Activated naive CD4-positive, alpha-beta T cell treated with anti-CD3 and anti-CD28 coated beads, Interleukin-2, amount 10 ng/mL, durations not matched to agents 7 days and 5 days (primary cell): ENCODE measurements at regions of chr2 and their contacts with region 1.

Region 1: DNA sequence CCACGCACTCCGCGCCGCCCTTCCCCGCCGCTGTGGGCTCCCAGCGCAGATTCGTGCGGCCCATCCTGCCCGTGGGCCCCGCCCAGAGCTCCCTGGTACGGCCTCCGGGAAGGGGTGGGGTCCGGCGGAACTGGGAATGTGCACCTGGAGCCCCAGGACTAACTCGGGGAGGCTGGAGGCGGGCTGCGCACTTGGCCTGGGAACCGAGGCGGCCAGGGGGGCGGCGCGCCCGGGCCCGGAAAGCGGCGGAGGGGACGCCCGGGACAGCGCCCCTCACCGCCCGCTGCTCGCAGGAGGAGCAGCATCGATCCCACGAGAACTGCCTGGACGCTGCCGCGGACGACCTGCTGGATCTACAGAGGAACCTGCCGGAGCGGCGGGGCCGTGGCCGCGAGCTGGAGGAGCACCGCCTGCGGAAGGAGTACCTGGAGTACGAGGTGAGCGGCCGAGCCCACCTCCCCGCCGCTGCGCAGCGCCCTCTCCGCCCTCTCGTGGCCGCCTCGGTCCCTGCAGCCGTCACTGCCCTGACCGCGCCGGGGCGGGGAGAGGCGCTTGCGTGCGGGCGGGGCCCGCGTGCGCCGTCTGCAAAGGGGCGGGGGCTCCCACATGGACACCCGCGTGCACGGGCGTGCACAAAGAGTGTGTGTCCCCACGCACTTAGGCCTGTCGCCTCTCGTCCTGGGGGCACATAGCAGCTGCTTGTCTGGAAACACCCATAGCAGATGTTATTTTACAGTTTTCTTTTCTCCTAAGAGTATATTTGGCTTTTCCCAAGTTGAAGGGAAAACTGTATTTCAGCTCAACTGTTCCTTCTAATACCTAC is 25.2 kb downstream of the PSD4 start:
- DNase-seq: peak; percentile 84
- H3K4me3 Mint-ChIP-seq: no peak overlapping the region
- H3K27ac Mint-ChIP-seq: no peak overlapping the region
- H3K4me1 Mint-ChIP-seq: peaks cover 58% of the 10 kb centered on the region
- H3K27me3 Mint-ChIP-seq: no peaks in the 10 kb centered on the region

Region 2: DNA sequence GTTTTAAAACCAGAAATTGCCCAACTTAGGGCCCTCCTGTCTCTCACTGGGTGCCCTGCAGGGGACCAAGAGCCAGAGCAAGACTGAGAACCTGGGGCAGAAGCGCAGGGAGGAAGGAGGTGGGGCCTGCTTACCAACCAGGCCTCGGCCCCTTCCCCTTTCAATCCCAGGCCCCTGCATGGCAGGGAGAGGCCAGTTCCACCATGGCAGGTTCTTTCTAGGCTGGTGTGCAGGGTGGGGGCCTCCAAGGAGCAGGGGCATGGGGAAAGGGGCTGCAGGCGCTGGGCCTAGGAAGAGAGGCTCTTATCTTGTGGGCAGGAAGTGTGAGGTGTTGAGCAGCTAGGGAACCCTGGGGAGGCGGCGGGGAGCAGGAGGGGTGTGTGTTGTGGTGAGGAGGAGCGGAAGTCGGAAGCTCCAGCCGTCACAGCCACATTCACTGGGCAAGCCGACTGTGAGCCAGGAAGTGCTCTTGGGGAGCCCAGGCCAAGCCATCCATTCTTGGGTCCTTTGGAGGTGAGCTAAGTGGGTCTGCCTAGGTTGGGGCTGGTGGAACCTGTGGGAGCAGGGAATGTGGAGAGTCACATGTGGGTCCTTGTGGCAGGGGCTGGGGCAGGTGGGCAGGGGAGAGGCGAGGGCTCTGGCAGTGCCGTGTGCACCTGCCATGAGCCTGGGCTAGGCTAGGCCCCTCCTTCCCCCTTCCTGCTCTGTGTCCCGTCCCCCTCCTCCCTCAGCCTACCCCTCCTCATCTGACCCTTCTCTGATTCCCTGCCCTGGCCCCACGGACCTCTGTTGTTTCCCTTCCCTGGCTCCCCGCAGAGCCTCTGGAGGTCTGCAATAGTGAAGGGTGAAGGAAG is 25.2 kb before region 1 on chr2 and contains the start of gene PSD4:
- CTCF ChIA-PET with region 1: interaction called, 58 read pairs
- DNase-seq: peak; percentile 96
- H3K4me3 Mint-ChIP-seq: peak within 1 kb of the TSS; percentile 86
- H3K27ac Mint-ChIP-seq: peak within 1 kb of the TSS; percentile 88
- H3K4me1 Mint-ChIP-seq: peaks cover 76% of the 10 kb centered on the region
- H3K27me3 Mint-ChIP-seq: no peaks in the 10 kb centered on the region

Region 3: DNA sequence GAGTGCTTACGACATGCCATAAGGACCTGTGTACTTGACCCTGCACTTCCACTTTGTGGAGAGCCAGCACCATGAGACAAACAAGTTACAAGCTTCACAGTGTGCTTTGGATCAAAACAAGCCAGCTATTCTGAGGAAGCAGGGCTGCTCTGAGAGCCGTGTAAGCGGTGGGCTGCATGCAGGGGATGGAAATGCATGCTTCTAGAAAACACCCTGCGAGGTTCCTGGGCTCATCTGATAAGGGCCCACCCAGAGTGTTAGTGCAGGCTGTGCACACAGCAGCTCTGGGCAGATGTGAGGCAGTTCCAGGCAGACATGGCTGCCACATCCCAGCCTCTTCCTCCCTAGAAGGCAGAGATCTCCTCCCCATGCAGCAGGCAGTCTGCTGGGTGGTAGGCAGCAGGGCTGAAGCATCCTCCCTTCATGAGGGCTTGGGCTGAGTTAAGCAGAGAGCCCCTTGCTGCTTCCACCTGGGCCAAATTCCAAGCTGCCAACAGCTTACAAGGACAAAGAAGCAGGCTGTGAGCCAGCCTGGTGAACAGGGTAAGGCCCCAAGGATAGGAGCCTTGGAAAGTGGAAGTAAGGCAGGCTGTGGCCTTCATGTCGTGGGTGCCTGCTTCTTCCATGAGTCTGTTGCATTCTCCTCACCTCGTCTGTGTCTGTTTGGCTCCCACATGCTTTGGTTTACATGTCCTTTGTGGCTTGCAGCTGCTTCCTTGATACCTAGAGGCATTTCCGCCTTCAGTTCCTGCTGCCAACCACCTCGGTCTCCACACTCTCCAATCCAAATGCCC is 17.5 kb before region 1 on chr2:
- CTCF ChIA-PET with region 1: interaction called, 58 read pairs
- DNase-seq: peak; percentile 49
- H3K4me3 Mint-ChIP-seq: peak overlapping the region; percentile 86
- H3K27ac Mint-ChIP-seq: peak overlapping the region; percentile 88
- H3K4me1 Mint-ChIP-seq: peaks cover 91% of the 10 kb centered on the region
- H3K27me3 Mint-ChIP-seq: no peaks in the 10 kb centered on the region